Heart right ventricle (tissue), 16 donors: ENCODE measurements at regions of chr17 and their contacts with region 1.

Region 1: DNA sequence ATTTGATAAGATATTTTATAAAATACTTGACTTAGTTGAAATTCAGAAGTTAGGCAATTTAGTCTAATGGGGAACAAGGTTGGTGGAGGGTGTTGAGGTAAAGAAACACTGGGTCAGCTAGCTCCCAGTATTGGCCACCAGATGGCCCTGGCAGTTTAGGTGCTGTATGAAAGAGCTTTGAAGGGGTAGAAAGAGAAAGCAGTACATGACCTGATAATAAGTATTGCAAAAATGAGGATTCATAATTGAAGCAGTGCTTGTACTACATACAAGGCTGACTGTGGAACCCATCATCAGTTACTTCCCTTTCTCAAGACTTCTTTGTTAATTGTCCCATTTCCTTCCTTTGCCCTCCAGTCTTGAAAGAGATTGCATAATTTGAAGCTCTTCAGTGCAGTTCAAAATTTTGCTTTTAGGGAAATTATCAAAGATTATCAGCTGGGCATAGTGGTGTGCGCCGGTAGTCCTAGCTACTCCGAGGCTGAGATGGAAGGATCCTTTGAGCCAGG is 29.4 kb downstream of the TANC2 start:
- DNase-seq: peak in 1 of 2 donors; percentile 8
- ATAC-seq: peak in 5 of 8 donors; percentile 14 to 69 (median 54)
- H3K4me3 ChIP-seq: no peak overlapping the region
- H3K27ac ChIP-seq: no peak overlapping the region
- H3K4me1 ChIP-seq: peaks cover 0 to 18% (median 6%) of the 10 kb centered on the region in 9 donors
- H3K27me3 ChIP-seq: no peaks in the 10 kb centered on the region
- CTCF ChIP-seq: peak in 7 of 9 donors; percentile 38 to 61 (median 55)

Region 2: DNA sequence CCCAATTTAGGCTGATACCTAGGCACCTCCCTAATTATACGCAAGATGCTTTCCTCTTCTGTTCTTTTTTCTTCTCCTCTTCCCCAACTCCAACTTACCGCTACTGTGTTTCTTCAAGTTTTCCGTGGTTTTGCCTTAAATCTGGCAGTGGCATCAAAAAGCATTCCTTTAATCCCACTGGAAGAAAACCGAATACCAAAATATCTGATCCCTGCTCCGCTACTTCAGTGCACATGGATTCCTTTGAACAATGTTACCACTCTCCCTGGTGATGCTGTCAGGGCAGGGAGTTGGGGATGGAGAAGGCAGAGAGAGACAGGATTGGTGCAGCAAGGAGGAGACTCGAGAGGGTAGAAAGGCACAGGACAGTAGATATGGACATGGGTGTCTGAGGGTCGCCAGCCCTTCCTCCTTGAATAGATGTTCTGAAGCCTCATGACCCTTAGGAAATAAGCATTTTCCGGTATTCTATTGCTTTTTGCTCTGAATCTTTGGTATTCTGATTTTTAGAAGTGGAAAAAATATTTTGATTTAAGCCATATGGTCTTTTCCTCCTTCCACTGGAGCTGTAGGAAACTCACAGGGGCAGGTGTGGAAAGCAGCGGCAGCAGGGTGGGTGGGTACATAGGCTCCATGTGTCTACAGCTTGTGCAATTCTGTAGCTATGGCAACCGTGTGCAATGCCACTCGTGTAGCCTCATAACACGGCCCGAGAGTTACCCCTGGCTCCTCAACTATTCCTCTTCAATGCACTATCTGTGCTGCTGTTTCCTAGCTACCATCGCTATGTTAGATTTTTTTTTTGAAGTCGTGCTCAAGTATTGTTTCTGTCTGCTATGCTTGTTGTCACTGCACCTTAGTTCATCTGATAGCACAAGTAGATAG is 61.7 kb before region 1 on chr17:
- intact Hi-C with region 1: no loop called
- DNase-seq: no peak
- ATAC-seq: peak in 1 of 8 donors; percentile 53
- H3K4me3 ChIP-seq: no peak overlapping the region
- H3K27ac ChIP-seq: no peak overlapping the region
- H3K4me1 ChIP-seq: peaks cover 0 to 11% (median 0%) of the 10 kb centered on the region in 9 donors
- H3K27me3 ChIP-seq: peaks cover 0 to 18% (median 0%) of the 10 kb centered on the region in 7 donors
- CTCF ChIP-seq: no peak

Region 3: DNA sequence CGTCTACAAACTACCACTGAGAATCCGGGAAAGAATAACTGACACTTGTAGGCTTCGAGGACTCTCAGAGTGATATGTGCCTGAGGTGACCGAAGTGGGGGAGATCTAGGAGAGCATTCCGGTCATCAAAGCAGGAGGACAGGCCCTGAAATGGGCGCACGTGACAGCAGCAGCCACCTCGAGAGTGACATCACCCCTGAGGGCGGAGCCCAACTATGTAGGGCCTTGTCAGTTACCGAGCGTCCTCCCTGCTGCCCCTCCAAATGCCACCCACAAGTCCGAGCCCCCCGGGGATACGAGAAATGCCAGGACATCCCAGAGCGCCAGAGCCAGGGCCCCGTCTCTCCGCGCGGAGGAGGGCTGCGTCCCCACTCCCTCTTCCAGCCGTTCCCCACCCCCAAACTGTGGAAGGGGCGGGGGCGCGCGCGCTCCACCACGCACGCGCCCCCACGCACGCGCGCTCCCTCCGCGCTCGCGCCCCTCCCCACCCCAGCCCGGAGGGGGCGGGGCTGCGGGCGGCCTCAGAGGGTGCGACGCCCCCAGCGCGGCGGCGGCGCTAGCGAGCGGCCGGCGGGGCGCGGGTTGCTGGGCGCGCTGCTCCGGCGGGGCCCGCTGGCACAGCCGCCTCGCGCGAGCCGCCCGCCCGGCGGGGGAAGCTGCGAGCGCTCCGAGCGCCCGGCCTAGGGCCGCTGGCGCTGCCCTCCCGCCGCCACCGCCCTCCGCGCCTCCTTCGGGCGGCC is 29.6 kb before region 1 on chr17 and contains the start of gene TANC2:
- intact Hi-C with region 1: no loop called
- DNase-seq: peak; percentile 77 to 80
- ATAC-seq: peak; percentile 93 to 98 (median 96)
- H3K4me3 ChIP-seq: peak within 1 kb of the TSS; percentile 80 to 95 (median 84)
- H3K27ac ChIP-seq: peak within 1 kb of the TSS in 9 of 10 donors; percentile 63 to 84 (median 77)
- H3K4me1 ChIP-seq: peaks cover 3 to 25% (median 22%) of the 10 kb centered on the region in 9 donors
- H3K27me3 ChIP-seq: no peaks in the 10 kb centered on the region
- CTCF ChIP-seq: no peak
- total RNA-seq, gene TANC2: 4.8 to 19.4 (median 8.8) TPM

Region 4: DNA sequence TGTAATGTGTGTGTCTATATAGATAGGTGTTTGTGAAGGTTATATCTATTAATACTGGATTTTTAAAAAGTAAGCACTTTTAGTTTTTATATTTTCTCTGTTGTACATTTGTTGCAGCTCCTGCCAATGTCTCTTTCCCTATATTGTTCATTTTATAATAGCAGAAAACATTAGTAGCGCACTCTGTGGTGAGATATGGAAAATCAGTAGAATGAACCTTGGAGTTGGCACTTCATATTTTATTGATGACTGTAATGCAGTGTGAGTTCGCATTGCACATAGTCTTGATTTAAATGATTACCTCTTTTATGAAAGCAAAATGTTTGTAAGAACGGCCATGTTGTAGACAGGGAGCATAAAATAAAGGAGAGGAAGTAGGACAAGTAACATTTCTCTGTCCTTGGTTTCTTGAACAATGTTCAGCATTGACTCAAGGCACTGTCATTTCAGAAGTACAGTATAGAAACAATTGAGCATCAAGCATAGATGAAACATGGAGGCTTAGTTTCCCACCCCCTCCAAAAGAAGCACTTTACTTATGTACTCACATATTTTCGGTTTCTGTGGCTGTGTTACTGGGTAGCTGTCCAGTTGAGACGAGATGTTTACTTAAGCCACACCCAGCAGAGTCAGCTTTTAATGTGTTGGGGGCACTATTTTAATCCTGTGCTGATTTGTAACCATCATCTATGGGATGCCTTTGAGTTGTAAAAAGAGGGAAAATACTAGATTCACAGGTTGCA is 44.6 kb after region 1 on chr17:
- intact Hi-C with region 1: loop called in 1 of 10 experiments (anchors 10 kb)
- DNase-seq: no peak
- ATAC-seq: no peak
- H3K4me3 ChIP-seq: peak overlapping the region in 5 of 10 donors; percentile 1 to 22 (median 12)
- H3K27ac ChIP-seq: no peak overlapping the region
- H3K4me1 ChIP-seq: peaks cover 0 to 19% (median 5%) of the 10 kb centered on the region in 9 donors
- H3K27me3 ChIP-seq: no peaks in the 10 kb centered on the region
- CTCF ChIP-seq: no peak

Region 5: DNA sequence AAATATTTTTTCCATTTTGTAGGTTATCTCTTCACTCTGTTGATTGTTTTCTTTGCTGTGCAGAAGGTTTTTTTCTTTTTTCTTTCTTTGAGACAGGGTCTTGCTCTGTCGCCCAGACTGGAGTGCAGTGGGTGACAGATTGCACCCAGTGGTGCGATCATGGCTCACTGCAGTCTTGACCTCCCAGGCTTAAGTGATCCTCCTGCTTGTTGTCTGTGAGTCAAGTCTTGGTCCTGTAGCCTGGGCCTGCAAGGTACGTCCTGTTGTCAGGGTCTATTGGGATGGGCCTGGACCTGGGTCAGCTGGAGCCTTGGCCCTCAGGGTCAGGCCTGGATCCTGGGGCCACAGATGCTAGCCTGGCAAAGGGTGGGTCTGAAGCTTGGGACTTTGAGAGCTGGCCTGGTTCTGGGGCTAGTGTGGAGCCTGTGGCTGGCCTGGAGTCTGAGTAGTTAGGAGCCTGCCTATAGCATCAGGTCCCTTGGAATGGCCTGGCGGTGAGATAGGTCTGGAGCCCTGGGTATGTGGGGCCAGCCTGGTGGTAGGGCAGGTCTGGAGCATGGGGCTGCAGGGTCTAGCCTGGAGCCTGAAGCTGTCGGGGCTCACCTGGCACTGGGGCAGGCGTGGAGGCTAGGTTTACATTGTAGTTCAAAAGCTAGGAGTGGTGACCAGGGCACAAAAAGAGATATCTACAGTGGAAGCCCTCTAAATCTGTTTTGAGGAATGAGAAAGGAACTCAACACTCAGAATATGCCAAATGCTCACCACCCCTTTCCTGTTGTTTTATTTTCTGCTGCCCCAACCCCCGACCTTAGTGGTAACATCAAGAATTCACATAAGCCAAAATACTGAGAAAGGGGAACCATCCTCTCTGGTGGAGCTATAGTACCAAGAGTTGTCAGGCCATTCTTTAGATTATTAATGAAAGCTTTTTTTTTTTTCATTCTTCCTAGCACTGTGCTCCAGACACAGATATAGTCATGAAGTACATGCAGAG is 70.7 kb after region 1 on chr17:
- intact Hi-C with region 1: no loop called
- DNase-seq: no peak
- ATAC-seq: no peak
- H3K4me3 ChIP-seq: no peak overlapping the region
- H3K27ac ChIP-seq: no peak overlapping the region
- H3K4me1 ChIP-seq: no peaks in the 10 kb centered on the region
- H3K27me3 ChIP-seq: no peaks in the 10 kb centered on the region
- CTCF ChIP-seq: no peak